ENCODE measurements at regions of chr9 and their contacts with region 1.

Region 1: DNA sequence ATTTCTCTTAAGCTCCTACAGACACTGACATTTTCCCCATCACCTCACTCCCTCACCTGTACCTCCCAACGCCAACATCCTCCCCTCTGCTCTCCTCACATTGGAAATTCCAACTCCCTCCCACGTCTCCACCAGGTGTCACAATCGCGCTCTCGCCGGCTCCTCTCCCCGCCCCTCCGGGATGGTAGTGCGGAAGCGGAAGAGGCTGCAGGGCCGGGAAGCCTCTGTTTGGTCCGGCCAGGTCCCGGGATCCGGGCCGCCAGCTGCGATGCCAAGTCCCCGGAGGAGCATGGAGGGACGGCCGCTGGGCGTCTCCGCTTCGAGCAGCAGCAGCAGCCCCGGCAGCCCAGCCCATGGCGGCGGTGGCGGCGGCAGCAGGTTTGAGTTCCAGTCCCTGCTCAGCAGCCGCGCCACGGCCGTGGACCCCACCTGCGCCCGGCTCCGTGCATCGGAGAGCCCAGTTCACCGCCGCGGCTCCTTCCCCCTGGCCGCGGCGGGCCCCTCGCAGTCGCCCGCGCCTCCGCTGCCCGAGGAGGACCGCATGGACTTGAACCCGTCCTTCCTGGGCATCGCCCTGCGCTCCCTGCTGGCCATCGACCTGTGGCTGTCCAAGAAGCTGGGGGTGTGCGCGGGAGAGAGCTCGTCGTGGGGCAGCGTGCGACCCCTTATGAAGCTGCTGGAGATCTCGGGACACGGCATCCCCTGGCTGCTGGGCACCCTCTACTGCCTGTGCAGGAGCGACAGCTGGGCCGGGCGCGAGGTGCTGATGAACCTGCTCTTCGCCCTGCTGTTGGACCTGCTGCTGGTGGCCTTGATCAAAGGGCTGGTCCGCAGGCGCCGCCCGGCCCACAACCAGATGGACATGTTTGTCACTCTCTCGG is at the start of gene PLPP6:
- DNase-seq: peak; percentile 75 to 83
- H3K4me3 ChIP-seq: peak within 1 kb of the TSS; percentile 77
- H3K27ac ChIP-seq: peak within 1 kb of the TSS; percentile 56
- H3K4me1 ChIP-seq: peaks cover 41% of the 10 kb centered on the region
- H3K27me3 ChIP-seq: no peaks in the 10 kb centered on the region
- CTCF ChIP-seq: peak; percentile 46; the same call in 1 of the 2 replicates
- total RNA-seq, gene PLPP6: 4.9 and 5.9 TPM in 2 replicates

Region 2: GRCh38 chr9:4530375-4530774 is 132.0 kb before region 1 on chr9:
- CTCF ChIA-PET with region 1: no interaction called
- POLR2A ChIA-PET with region 1: no interaction called
- intact Hi-C with region 1: loop called (anchors 2 kb)
- DNase-seq: peak; percentile 38 to 95
- H3K4me3 ChIP-seq: peak overlapping the region; percentile 25; the same call in 1 of the 2 replicates
- H3K27ac ChIP-seq: peak overlapping the region; percentile 86
- H3K4me1 ChIP-seq: peaks cover 30% of the 10 kb centered on the region
- H3K27me3 ChIP-seq: no peaks in the 10 kb centered on the region
- CTCF ChIP-seq: no peak

Region 3: DNA sequence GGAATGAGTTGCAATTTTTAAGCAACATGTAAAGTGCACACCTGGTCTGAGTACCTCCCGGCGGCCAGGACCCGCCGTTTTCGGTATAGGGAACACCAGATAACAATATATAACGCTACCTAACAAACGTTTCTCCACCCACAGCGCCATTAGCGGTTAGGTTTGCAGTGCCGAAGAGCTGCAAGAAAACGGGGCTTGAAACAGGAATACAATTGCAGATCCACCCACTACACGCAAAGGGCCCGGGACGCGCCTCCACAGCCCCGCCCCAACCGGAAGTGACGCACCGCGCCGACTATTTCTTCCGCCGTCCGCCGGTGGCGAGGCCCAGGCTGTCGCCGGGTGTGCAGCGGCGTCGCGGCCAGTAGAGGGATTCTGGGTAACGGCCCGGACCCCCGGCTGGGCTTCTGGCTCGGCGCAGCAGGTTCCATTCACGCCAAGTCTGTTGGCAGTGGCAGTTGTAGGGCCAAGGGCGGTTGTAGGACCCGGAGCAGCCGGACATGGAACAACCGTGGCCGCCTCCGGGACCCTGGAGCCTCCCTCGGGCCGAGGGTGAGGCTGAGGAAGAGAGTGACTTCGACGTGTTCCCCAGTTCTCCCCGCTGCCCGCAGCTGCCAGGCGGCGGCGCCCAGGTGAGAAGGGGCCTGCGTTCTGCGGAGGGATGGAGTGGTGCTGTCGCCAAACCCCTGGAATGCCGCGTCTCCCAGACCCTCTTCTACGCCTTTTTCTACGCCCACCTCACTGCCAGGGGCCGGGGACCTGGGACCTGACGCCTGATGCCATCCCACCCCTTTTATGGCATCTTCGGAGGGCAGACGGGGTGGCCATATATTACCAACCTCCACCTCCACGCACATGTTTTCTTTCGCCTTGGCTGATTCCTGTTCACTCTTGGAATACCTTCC is 17.2 kb after region 1 on chr9 and contains the start of gene CDC37L1:
- CTCF ChIA-PET with region 1: no interaction called
- POLR2A ChIA-PET with region 1: interaction called, 3 read pairs
- intact Hi-C with region 1: loop called (anchors 1 kb)
- DNase-seq: peak; percentile 81 to 93
- H3K4me3 ChIP-seq: peak within 1 kb of the TSS; percentile 87
- H3K27ac ChIP-seq: peak within 1 kb of the TSS; percentile 82
- H3K4me1 ChIP-seq: peaks cover 20% of the 10 kb centered on the region
- H3K27me3 ChIP-seq: no peaks in the 10 kb centered on the region
- CTCF ChIP-seq: peak; percentile 63
- total RNA-seq, gene CDC37L1: 6.7 and 7.7 TPM in 2 replicates

Region 4: GRCh38 chr9:4740638-4741364 is 78.5 kb after region 1 on chr9 and contains the start of gene AK3:
- CTCF ChIA-PET with region 1: no interaction called
- POLR2A ChIA-PET with region 1: interaction called, 3 read pairs
- intact Hi-C with region 1: loop called (anchors 2 kb)
- DNase-seq: peak; percentile 63 to 84
- H3K4me3 ChIP-seq: peak within 1 kb of the TSS; percentile 73
- H3K27ac ChIP-seq: peak within 1 kb of the TSS; percentile 49
- H3K4me1 ChIP-seq: peaks cover 16% of the 10 kb centered on the region
- H3K27me3 ChIP-seq: no peaks in the 10 kb centered on the region
- CTCF ChIP-seq: no peak
- total RNA-seq, gene AK3: 34.0 and 36.2 TPM in 2 replicates

Measured in PC-9 (cell line).